ENCODE measurements at regions of chr1 and their contacts with region 1.

Region 1: GRCh38 chr1:61453111-61453961 is 271.6 kb downstream of the TM2D1 start:
- DNase-seq: peak; percentile 57
- ATAC-seq: peak; percentile 91
- H3K4me3 ChIP-seq: no peak overlapping the region
- H3K27ac ChIP-seq: no peak overlapping the region
- H3K4me1 ChIP-seq: peaks cover 0 to 3% of the 10 kb centered on the region in 2 experiments; a peak in 1 of 4 replicates
- H3K27me3 ChIP-seq: no peaks in the 10 kb centered on the region
- CTCF ChIP-seq: peak; percentile 76 to 89 (median 80)
- POLR2A ChIP-seq: no peak
- RAD21 ChIP-seq: peak; percentile 84

Region 2: GRCh38 chr1:60153961-60154360 is 1299.4 kb before region 1 on chr1:
- CTCF ChIA-PET with region 1: no interaction called
- POLR2A ChIA-PET with region 1: no interaction called
- RAD21 ChIA-PET with region 1: no interaction called
- intact Hi-C with region 1: loop called (anchors 10 kb)
- DNase-seq: no peak
- ATAC-seq: no peak
- H3K4me3 ChIP-seq: no peak overlapping the region
- H3K27ac ChIP-seq: no peak overlapping the region
- H3K4me1 ChIP-seq: no peaks in the 10 kb centered on the region
- H3K27me3 ChIP-seq: peaks cover 21% of the 10 kb centered on the region
- CTCF ChIP-seq: no peak
- POLR2A ChIP-seq: no peak
- RAD21 ChIP-seq: no peak

Region 3: GRCh38 chr1:60848583-60849188 is 604.6 kb before region 1 on chr1:
- CTCF ChIA-PET with region 1: no interaction called
- POLR2A ChIA-PET with region 1: no interaction called
- RAD21 ChIA-PET with region 1: no interaction called
- intact Hi-C with region 1: loop called (anchors 1 kb)
- DNase-seq: peak; percentile 54
- ATAC-seq: peak; percentile 69
- H3K4me3 ChIP-seq: no peak overlapping the region
- H3K27ac ChIP-seq: no peak overlapping the region
- H3K4me1 ChIP-seq: no peaks in the 10 kb centered on the region
- H3K27me3 ChIP-seq: no peaks in the 10 kb centered on the region
- CTCF ChIP-seq: peak; percentile 51 to 69 (median 60); a peak in 4 of 6 replicates
- POLR2A ChIP-seq: no peak
- RAD21 ChIP-seq: peak; percentile 74

Region 4: DNA sequence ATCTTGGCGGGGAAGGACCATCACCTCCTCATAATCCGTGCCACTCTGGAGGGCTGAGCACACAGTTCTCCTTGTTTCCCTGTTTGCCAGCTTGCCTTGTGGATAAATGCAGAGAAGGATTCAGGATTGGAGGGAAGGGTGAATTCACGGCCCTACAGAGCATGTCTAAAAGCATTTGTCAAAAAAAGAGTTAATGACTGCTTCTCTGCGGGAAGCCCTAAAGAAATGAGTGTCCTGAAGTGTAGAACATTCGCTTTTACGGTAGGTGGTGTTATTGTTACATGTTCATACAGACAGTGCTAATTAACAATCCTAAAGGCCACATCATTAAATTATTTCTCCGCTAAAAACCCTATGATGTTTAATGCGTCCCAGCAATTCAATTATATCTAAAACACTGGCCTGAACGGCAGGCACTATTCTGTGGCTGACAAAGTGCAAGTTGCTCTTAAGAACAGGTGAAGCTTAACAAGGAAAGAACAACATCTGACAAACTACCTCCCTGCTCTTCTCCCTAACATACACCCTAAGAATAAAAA is 483.3 kb before region 1 on chr1:
- CTCF ChIA-PET with region 1: no interaction called
- POLR2A ChIA-PET with region 1: no interaction called
- RAD21 ChIA-PET with region 1: no interaction called
- intact Hi-C with region 1: loop called (anchors 2 kb)
- DNase-seq: no peak
- ATAC-seq: peak; percentile 74
- H3K4me3 ChIP-seq: no peak overlapping the region
- H3K27ac ChIP-seq: no peak overlapping the region
- H3K4me1 ChIP-seq: peaks cover 0 to 10% of the 10 kb centered on the region in 2 experiments; a peak in 3 of 4 replicates
- H3K27me3 ChIP-seq: no peaks in the 10 kb centered on the region
- CTCF ChIP-seq: peak in 2 of 3 experiments; percentile 50 to 59; a peak in 3 of 6 replicates
- POLR2A ChIP-seq: no peak
- RAD21 ChIP-seq: peak; percentile 80

Region 5: DNA sequence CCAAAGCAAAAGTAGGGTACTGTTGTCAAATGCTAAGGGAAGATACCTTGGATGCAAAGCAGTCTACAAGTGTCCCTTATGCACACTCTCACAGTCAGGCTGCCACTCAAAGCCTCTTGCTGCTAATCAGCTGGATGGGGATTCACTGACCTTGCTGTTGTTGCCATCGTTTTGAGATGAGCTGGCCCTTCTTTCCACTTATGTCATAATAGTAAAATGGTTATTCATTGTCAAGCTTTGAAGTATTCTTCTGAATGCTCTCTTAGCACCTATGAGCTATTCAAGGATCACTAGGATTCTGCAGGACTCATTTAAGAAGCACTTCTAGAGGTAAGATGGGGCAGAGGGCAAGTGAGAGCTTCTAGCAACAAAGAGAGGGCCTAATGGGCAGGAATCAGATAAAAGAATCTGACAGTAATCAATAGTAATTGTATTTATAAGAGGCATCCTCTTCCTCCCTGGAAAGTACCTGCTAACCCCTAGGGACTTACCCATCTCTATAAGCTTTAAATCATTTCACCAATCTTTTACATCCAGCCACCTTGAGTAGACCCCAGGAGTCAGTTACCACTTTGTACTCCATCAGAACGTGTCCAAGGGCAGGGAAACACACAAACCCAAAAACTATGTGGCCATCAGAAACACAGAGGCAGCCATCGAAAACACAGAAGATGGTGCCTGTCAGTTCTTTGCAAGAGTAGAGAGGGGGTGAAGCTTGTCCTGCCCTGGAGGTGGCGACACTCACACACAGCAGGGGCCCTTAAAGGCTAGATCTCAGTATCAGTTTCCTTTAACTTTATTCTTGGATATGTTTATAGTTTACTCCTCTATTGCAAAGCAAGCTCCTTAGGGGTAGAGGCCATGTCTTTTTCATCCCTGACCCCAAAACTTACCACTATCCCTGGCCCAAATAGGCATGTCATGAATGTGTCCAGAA is 474.6 kb before region 1 on chr1:
- CTCF ChIA-PET with region 1: interaction called, 16 read pairs
- POLR2A ChIA-PET with region 1: no interaction called
- RAD21 ChIA-PET with region 1: no interaction called
- intact Hi-C with region 1: loop called (anchors 2 kb)
- DNase-seq: no peak
- ATAC-seq: peak; percentile 95
- H3K4me3 ChIP-seq: no peak overlapping the region
- H3K27ac ChIP-seq: no peak overlapping the region
- H3K4me1 ChIP-seq: no peaks in the 10 kb centered on the region
- H3K27me3 ChIP-seq: no peaks in the 10 kb centered on the region
- CTCF ChIP-seq: peak; percentile 71 to 74 (median 74); a peak in 5 of 6 replicates
- POLR2A ChIP-seq: no peak
- RAD21 ChIP-seq: peak; percentile 88

Region 6: DNA sequence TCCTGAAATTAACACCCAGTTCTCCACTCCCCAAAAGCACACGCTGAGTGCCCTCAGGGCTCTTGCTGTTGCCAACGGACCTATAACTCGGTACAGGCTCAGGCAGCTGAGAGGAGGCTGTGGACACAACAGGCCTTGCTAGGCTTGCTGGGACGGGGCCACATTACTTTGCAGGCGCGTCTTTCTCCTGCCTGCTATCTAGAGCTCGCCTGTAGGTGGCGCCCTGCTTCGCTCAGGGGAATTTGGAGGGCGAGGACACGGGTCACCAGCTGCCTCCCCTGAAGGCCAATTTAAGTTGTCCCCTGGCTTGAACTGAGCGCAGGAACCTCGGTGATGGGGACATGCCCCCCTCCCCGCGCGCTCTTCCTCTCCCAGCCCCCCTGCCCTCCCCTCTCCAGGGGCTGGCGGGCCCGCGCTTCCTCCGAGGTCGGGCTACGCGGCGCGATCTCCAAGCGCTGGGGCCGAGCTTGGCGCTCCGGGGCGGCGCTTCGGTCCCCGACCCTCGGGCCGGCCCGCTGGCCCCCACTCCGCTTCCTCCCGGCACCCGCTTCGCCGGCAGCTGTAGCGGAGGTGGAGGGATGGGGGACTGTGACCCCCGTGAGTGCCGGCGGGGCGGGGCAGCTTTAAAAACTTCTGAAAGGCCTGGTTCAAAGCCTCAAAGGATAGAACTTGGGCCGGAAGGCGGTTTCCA is 403.3 kb before region 1 on chr1:
- CTCF ChIA-PET with region 1: interaction called, 8 read pairs
- POLR2A ChIA-PET with region 1: no interaction called
- RAD21 ChIA-PET with region 1: no interaction called
- intact Hi-C with region 1: loop called (anchors 1 kb)
- DNase-seq: peak; percentile 73
- ATAC-seq: peak; percentile 90
- H3K4me3 ChIP-seq: peak overlapping the region; percentile 53 to 75
- H3K27ac ChIP-seq: peak overlapping the region; percentile 8; the same call in 1 of the 2 replicates
- H3K4me1 ChIP-seq: peaks cover 0 to 8% of the 10 kb centered on the region in 2 experiments; a peak in 2 of 4 replicates
- H3K27me3 ChIP-seq: no peaks in the 10 kb centered on the region
- CTCF ChIP-seq: peak; percentile 74 to 97 (median 91)
- POLR2A ChIP-seq: no peak
- RAD21 ChIP-seq: peak; percentile 87

Region 7: DNA sequence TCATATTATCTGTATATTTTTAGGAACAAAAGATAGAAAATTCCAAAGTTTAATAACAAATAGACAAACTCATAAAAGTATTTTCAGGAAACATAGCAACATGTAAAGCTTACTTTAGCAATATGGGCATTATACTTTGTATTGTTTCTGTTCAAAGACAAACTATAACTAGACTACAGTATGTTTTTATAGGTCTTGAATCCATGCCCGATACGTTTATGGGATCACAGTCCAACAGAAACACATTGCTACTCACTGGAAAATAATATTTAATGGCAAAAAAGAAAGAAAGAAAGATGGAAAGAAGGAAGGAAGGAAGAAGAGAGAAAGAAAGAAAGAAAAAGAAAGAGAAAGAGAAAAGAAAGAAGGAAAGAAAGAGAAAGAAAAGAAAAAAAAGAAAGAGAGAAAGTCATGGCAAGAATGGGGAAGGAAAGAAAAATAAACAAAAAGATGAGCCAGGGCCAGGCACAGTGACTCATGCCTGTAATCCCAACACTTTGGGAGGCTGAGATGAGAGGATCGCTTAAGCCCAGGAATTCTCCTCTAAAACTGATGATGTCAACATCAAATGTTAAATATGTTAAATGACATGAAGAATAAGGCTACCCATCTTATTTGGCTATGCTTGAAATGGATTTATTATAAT is 238.9 kb after region 1 on chr1:
- CTCF ChIA-PET with region 1: no interaction called
- POLR2A ChIA-PET with region 1: no interaction called
- RAD21 ChIA-PET with region 1: no interaction called
- intact Hi-C with region 1: no loop called
- DNase-seq: no peak
- ATAC-seq: peak; percentile 63
- H3K4me3 ChIP-seq: no peak overlapping the region
- H3K27ac ChIP-seq: peak overlapping the region; percentile 58
- H3K4me1 ChIP-seq: peaks cover 10 to 16% of the 10 kb centered on the region in 2 experiments
- H3K27me3 ChIP-seq: no peaks in the 10 kb centered on the region
- CTCF ChIP-seq: no peak
- POLR2A ChIP-seq: no peak
- RAD21 ChIP-seq: no peak

Region 8: GRCh38 chr1:61851849-61852669 is 398.7 kb after region 1 on chr1:
- CTCF ChIA-PET with region 1: no interaction called
- POLR2A ChIA-PET with region 1: no interaction called
- RAD21 ChIA-PET with region 1: no interaction called
- intact Hi-C with region 1: loop called (anchors 2 kb)
- DNase-seq: peak; percentile 56
- ATAC-seq: peak; percentile 84
- H3K4me3 ChIP-seq: no peak overlapping the region
- H3K27ac ChIP-seq: no peak overlapping the region
- H3K4me1 ChIP-seq: no peaks in the 10 kb centered on the region
- H3K27me3 ChIP-seq: no peaks in the 10 kb centered on the region
- CTCF ChIP-seq: peak; percentile 57 to 74 (median 60); a peak in 5 of 6 replicates
- POLR2A ChIP-seq: no peak
- RAD21 ChIP-seq: peak; percentile 80

Measured in HCT116 (cell line).